Activated B cell treated with CpG ODN at 0.5 μM for 24 hours (primary cell): ENCODE measurements at regions of chr4 and their contacts with region 1.

Region 1: GRCh38 chr4:2598511-2599303 is 62.3 kb downstream of the FAM193A start:
- DNase-seq: peak; percentile 41
- ATAC-seq: peak; percentile 98
- H3K4me3 Mint-ChIP-seq: peak overlapping the region; percentile 67
- H3K27ac Mint-ChIP-seq: peak overlapping the region; percentile 85
- H3K4me1 Mint-ChIP-seq: peaks cover 68% of the 10 kb centered on the region
- H3K27me3 Mint-ChIP-seq: no peaks in the 10 kb centered on the region
- CTCF ChIP-seq: no peak

Region 2: GRCh38 chr4:2647403-2648158 is 48.9 kb after region 1 on chr4:
- CTCF ChIA-PET with region 1: no interaction called
- POLR2A ChIA-PET with region 1: no interaction called
- intact Hi-C with region 1: loop called (anchors 10 kb)
- DNase-seq: no peak
- ATAC-seq: no peak
- H3K4me3 Mint-ChIP-seq: no peak overlapping the region
- H3K27ac Mint-ChIP-seq: no peak overlapping the region
- H3K4me1 Mint-ChIP-seq: peaks cover 15% of the 10 kb centered on the region
- H3K27me3 Mint-ChIP-seq: no peaks in the 10 kb centered on the region
- CTCF ChIP-seq: no peak

Region 3: GRCh38 chr4:2689825-2690700 is 91.4 kb after region 1 on chr4:
- CTCF ChIA-PET with region 1: interaction called, 3 read pairs
- POLR2A ChIA-PET with region 1: no interaction called
- intact Hi-C with region 1: loop called (anchors 5 kb)
- DNase-seq: peak; percentile 78
- ATAC-seq: peak; percentile 85
- H3K4me3 Mint-ChIP-seq: peak overlapping the region; percentile 75
- H3K27ac Mint-ChIP-seq: peak overlapping the region; percentile 95
- H3K4me1 Mint-ChIP-seq: peaks cover 70% of the 10 kb centered on the region
- H3K27me3 Mint-ChIP-seq: no peaks in the 10 kb centered on the region
- CTCF ChIP-seq: no peak

Region 4: DNA sequence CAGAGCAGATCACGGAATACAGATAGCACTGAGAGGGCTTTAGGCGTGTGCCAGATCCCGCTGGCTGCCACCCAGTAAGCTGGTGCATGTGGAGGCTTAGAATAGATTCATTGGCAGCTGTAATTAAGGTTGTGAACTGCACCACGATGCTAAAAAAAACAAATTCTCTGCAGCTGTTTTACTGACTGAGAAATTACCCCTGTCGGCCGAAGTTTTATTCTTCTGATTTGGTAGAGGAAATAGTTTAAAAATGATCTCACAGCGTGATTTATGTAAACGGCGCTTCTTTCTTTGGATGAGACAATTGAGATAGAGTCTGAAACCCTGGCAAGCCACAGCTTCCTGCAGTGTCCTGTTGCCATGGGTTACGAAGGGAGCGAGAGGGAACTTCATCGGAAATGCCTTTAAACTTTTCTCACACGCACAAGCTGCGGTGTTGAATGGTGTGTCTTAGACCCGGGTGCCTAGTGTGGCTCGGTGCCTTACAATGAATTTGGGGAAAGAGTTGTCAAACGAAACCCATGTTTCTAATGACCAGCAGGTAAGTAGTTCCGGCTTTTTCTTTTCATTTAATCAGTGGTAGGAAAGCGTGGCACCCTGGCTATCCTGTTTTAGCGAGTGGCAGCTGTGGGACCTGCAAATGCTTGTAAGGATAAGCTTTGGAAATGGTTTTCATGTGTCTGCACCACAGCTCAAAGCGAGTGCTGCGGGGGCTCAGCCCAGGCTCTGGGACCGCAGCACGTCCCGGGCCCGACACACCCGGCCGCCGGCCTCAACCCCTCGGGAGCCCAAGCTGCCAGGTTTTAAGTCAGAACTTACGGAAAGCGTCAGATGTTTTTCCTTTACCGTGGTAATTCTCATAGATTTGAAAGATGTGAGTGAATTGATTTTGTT is 771.3 kb after region 1 on chr4:
- CTCF ChIA-PET with region 1: no interaction called
- POLR2A ChIA-PET with region 1: no interaction called
- intact Hi-C with region 1: no loop called
- DNase-seq: no peak
- ATAC-seq: no peak
- H3K4me3 Mint-ChIP-seq: peak overlapping the region; percentile 64
- H3K27ac Mint-ChIP-seq: no peak overlapping the region
- H3K4me1 Mint-ChIP-seq: peaks cover 38% of the 10 kb centered on the region
- H3K27me3 Mint-ChIP-seq: peaks cover 11% of the 10 kb centered on the region
- CTCF ChIP-seq: no peak